Ascending aorta (tissue), 2 donors: ENCODE measurements at regions of chr2 and their contacts with region 1.

Region 1: GRCh38 chr2:196926562-196927375 is at the start of gene PGAP1:
- DNase-seq: peak; percentile 55 to 94
- H3K4me3 ChIP-seq: peak within 1 kb of the TSS; percentile 85
- H3K27ac ChIP-seq: peak within 1 kb of the TSS; percentile 84 to 89
- H3K4me1 ChIP-seq: peaks cover 0 to 4% of the 10 kb centered on the region in 2 donors
- H3K27me3 ChIP-seq: no peaks in the 10 kb centered on the region
- CTCF ChIP-seq: no peak
- total RNA-seq, gene PGAP1: 2.3 TPM

Region 2: GRCh38 chr2:196639180-196640030 is 287.4 kb before region 1 on chr2 and contains the start of gene CCDC150:
- intact Hi-C with region 1: loop called (anchors 5 kb)
- DNase-seq: peak; percentile 75 to 96
- H3K4me3 ChIP-seq: peak within 1 kb of the TSS; percentile 70 to 72
- H3K27ac ChIP-seq: no peak within 1 kb of the TSS
- H3K4me1 ChIP-seq: peaks cover 0 to 5% of the 10 kb centered on the region in 2 donors
- H3K27me3 ChIP-seq: no peaks in the 10 kb centered on the region
- CTCF ChIP-seq: peak; percentile 12 to 51 (median 21)
- total RNA-seq, gene CCDC150: 7.1 TPM

Region 3: GRCh38 chr2:196987649-196988364 is 61.0 kb after region 1 on chr2:
- intact Hi-C with region 1: loop called (anchors 5 kb)
- DNase-seq: peak in 1 of 2 donors; percentile 69
- H3K4me3 ChIP-seq: no peak overlapping the region
- H3K27ac ChIP-seq: peak overlapping the region; percentile 72 to 77
- H3K4me1 ChIP-seq: peaks cover 0 to 3% of the 10 kb centered on the region in 2 donors
- H3K27me3 ChIP-seq: no peaks in the 10 kb centered on the region
- CTCF ChIP-seq: no peak

Region 4: DNA sequence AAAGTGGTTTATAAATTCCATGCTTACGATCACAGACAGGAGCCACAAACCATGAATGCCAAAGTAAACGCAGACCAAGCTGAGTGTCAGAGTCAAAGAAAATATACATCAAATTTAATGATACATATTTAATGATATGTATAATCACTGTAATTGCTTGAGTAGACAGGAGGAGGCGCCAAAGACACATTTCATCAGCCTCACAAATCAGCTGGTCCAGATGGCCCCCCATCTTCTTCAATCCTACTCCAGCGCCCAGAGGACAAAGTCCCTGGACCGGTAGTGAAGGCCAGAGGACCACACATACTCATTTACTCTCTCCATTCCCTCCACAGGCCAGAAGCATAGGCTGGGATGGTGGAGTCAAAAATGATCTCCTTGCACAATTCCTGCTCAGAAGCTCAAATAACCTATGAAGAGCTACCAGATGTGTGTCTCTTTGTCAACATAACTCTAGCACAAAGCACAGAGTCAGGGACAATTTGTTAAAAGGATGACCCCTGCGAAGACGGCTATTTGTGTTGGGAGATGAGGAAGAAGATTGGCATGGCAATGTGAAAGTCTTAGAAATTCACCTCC is 149.1 kb after region 1 on chr2:
- intact Hi-C with region 1: loop called (anchors 5 kb)
- DNase-seq: no peak
- H3K4me3 ChIP-seq: no peak overlapping the region
- H3K27ac ChIP-seq: no peak overlapping the region
- H3K4me1 ChIP-seq: peaks cover 7 to 25% of the 10 kb centered on the region in 2 donors
- H3K27me3 ChIP-seq: no peaks in the 10 kb centered on the region
- CTCF ChIP-seq: peak; percentile 13 to 22 (median 14)

Region 5: DNA sequence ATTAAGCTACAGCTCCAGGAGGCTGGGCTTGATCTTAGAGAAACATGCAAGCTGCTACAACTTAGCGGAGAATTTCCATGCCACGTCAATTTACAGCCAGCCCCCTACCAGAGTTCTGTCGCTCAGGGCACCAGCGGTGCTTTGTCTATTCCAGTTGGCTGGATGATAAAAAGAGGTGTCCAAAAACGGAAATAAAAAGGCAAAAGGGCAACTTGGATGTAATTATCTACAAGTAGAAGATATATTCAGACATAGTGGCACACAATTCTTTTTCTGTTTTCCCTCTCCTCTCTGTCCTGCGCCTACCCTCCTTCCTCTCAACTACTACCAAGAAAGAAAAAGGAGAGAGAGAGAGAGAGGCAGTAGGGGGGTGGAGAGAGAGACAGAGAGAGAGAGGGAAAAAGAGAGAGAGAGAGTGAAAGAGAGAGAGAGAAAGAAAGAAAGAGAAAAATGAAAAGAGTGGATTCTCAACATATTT is 749.0 kb after region 1 on chr2:
- intact Hi-C with region 1: loop called (anchors 10 kb)
- DNase-seq: no peak
- H3K4me3 ChIP-seq: peak overlapping the region; percentile 48 to 65
- H3K27ac ChIP-seq: peak overlapping the region; percentile 68 to 85
- H3K4me1 ChIP-seq: peaks cover 0 to 10% of the 10 kb centered on the region in 2 donors
- H3K27me3 ChIP-seq: no peaks in the 10 kb centered on the region
- CTCF ChIP-seq: no peak